WTC11 (cell line): ENCODE measurements at regions of chr16 and their contacts with region 1.

Region 1: GRCh38 chr16:57045694-57046381 is 46.5 kb upstream of the CPNE2 start:
- DNase-seq: peak; percentile 71
- ATAC-seq: peak; percentile 94
- H3K4me3 Mint-ChIP-seq: peak overlapping the region; percentile 14; the same call in 1 of the 2 replicates
- H3K27ac Mint-ChIP-seq: no peak overlapping the region
- H3K4me1 Mint-ChIP-seq: peaks cover 20% of the 10 kb centered on the region
- H3K27me3 Mint-ChIP-seq: no peaks in the 10 kb centered on the region
- CTCF ChIP-seq: no peak

Region 2: GRCh38 chr16:57013229-57013628 is 32.6 kb before region 1 on chr16:
- CTCF ChIA-PET with region 1: interaction called, 13 read pairs
- POLR2A ChIA-PET with region 1: no interaction called
- DNase-seq: no peak
- ATAC-seq: no peak
- H3K4me3 Mint-ChIP-seq: no peak overlapping the region
- H3K27ac Mint-ChIP-seq: no peak overlapping the region
- H3K4me1 Mint-ChIP-seq: peaks cover 7% of the 10 kb centered on the region
- H3K27me3 Mint-ChIP-seq: no peaks in the 10 kb centered on the region
- CTCF ChIP-seq: no peak

Region 3: DNA sequence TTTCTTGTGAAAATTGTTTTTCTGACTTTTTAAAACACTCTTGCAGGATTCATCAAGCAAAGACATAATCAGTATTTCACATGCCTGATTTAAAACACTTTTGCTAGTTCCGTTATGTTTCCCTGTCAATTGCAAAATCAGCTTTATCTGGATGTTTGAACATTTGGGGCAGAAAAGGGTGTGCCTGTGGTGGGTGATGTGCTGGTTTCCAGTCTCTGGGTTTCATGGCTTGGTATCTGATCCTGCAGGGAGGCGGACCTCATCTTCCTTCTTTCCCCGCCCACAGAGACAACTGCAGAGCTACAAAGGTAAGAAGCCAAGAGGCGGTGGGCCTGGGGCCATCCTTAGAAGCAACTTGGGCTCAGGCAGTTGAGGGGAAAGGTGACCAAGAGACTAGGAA is 14.7 kb before region 1 on chr16:
- CTCF ChIA-PET with region 1: interaction called, 20 read pairs
- POLR2A ChIA-PET with region 1: no interaction called
- DNase-seq: no peak
- ATAC-seq: no peak
- H3K4me3 Mint-ChIP-seq: no peak overlapping the region
- H3K27ac Mint-ChIP-seq: no peak overlapping the region
- H3K4me1 Mint-ChIP-seq: peaks cover 12% of the 10 kb centered on the region; the same call in 1 of the 2 replicates
- H3K27me3 Mint-ChIP-seq: no peaks in the 10 kb centered on the region; the same call in 1 of the 2 replicates
- CTCF ChIP-seq: no peak

Region 4: DNA sequence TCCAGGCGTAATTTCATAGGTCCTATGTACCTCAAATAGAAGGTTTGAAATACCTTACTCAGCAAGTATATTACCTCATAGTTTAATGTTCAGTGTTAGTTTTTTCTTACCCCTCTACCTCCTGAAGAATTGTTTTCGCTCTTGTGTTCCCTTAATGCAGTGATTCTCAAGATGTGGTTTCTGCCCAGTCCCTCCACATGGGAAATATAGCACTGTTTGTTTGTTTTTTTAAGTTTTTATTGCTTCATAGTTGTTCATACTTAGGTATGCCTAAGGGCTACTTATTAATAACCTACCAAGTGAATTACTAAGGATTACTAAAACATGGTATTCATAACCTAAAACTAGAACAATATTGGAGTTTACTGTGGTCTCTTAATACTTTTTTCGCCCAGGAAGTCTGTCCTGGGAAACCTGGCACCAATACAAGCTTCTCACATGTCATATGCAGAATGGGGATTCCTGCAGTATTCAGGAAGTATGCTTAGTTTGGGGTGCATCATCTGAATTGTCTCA is 145.3 kb after region 1 on chr16:
- CTCF ChIA-PET with region 1: no interaction called
- POLR2A ChIA-PET with region 1: no interaction called
- DNase-seq: no peak
- ATAC-seq: no peak
- H3K4me3 Mint-ChIP-seq: no peak overlapping the region
- H3K27ac Mint-ChIP-seq: peak overlapping the region; percentile 14; the same call in 1 of the 2 replicates
- H3K4me1 Mint-ChIP-seq: peaks cover 18% of the 10 kb centered on the region
- H3K27me3 Mint-ChIP-seq: no peaks in the 10 kb centered on the region; the same call in 1 of the 2 replicates
- CTCF ChIP-seq: no peak